Heart right ventricle (tissue), 16 donors: ENCODE measurements at regions of chr9 and their contacts with region 1.

Region 1: GRCh38 chr9:98998441-98999151 is 54.9 kb downstream of the COL15A1 start:
- DNase-seq: peak; percentile 89 to 91
- ATAC-seq: peak; percentile 82 to 92 (median 88)
- H3K4me3 ChIP-seq: peak overlapping the region in 1 of 10 donors; percentile 10
- H3K27ac ChIP-seq: peak overlapping the region; percentile 58 to 92 (median 79)
- H3K4me1 ChIP-seq: peaks cover 26 to 75% (median 67%) of the 10 kb centered on the region in 9 donors
- H3K27me3 ChIP-seq: peaks cover 0 to 5% (median 0%) of the 10 kb centered on the region in 7 donors
- CTCF ChIP-seq: peak; percentile 82 to 97 (median 93)

Region 2: GRCh38 chr9:98848450-98849149 is 150.0 kb before region 1 on chr9:
- intact Hi-C with region 1: loop called in 2 of 10 experiments (anchors 5 to 10 kb)
- DNase-seq: peak; percentile 89 to 92
- ATAC-seq: peak; percentile 95 to 99 (median 98)
- H3K4me3 ChIP-seq: peak overlapping the region; percentile 15 to 50 (median 35)
- H3K27ac ChIP-seq: peak overlapping the region in 6 of 10 donors; percentile 13 to 50 (median 40)
- H3K4me1 ChIP-seq: peaks cover 0 to 17% (median 6%) of the 10 kb centered on the region in 9 donors
- H3K27me3 ChIP-seq: peaks cover 0 to 3% (median 0%) of the 10 kb centered on the region in 7 donors
- CTCF ChIP-seq: peak; percentile 73 to 98 (median 95)

Region 3: DNA sequence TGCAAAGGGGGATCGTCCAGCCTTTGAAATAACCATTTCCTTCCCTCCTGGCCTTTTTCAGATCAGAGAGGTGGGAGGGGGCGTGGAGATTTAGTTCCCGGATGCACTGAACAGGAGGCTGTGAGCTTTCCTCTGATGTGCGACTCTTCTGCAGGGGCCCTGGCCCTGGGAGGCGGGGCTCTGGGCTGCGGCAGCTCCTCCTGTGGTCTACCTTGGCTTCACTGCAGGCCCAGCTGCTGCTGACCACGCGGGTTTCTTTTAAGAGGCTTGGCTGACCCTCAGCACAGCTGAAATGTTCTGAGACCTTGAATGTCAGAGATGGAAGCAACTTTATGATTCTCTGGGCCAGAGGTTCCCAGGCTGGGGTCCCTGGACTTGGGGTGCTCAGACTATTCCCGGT is 81.9 kb before region 1 on chr9:
- intact Hi-C with region 1: loop called in 2 of 10 experiments (anchors 2 to 5 kb)
- DNase-seq: peak; percentile 59 to 63
- ATAC-seq: peak; percentile 78 to 91 (median 86)
- H3K4me3 ChIP-seq: no peak overlapping the region
- H3K27ac ChIP-seq: peak overlapping the region in 9 of 10 donors; percentile 1 to 92 (median 73)
- H3K4me1 ChIP-seq: peaks cover 10 to 37% (median 24%) of the 10 kb centered on the region in 9 donors
- H3K27me3 ChIP-seq: no peaks in the 10 kb centered on the region
- CTCF ChIP-seq: peak in 3 of 9 donors; percentile 10 to 16 (median 12)

Region 4: GRCh38 chr9:98974994-98975712 is 23.4 kb before region 1 on chr9:
- intact Hi-C with region 1: loop called in 4 of 10 experiments (anchors 2 kb)
- DNase-seq: peak; percentile 87 to 91
- ATAC-seq: peak; percentile 60 to 80 (median 72)
- H3K4me3 ChIP-seq: peak overlapping the region in 9 of 10 donors; percentile 2 to 44 (median 34)
- H3K27ac ChIP-seq: peak overlapping the region; percentile 20 to 92 (median 72)
- H3K4me1 ChIP-seq: peaks cover 33 to 100% (median 80%) of the 10 kb centered on the region in 9 donors
- H3K27me3 ChIP-seq: peaks cover 0 to 15% (median 0%) of the 10 kb centered on the region in 7 donors
- CTCF ChIP-seq: peak; percentile 98 to 100 (median 99)

Region 5: DNA sequence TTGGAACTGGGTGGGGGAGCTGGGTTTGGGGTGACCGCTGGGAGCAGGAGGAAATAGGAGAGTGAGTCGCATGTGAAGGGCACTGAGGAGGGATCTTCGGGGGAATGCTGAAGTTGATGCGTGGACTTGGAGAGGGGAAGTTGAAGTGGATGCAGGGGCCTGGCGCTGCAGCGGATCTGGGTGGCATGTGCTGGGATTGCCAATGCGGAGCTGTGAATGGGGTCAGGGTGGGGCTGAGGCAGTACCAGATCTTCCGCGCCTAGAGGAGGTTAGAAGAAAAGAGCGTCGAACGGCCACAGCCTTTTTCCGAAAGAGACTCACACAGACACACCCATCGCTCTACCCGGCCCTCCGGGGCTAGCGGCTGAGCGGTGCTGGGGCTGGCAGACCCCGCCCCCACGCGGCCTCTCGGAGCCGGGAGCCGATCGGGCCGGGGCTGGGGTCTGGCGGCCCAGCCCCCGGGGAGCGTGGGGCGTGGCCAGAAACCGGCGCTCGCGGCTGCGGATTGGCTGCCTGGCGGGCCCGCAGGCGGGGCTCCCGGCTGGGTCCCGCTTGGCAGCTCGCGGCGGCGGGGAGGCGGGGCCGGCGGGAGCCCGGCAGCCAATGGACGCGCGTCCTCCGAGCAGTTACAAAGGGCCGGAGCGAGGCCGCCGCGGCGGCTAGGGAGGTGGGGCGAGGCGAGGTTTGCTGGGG is 106.0 kb after region 1 on chr9 and contains the start of gene TGFBR1:
- intact Hi-C with region 1: loop called in 1 of 10 experiments (anchors 10 kb)
- DNase-seq: peak; percentile 92 to 95
- ATAC-seq: peak; percentile 90 to 97 (median 94)
- H3K4me3 ChIP-seq: peak within 1 kb of the TSS; percentile 52 to 96 (median 86)
- H3K27ac ChIP-seq: peak within 1 kb of the TSS; percentile 50 to 96 (median 89)
- H3K4me1 ChIP-seq: peaks cover 6 to 55% (median 45%) of the 10 kb centered on the region in 9 donors
- H3K27me3 ChIP-seq: no peaks in the 10 kb centered on the region
- CTCF ChIP-seq: peak in 3 of 9 donors; percentile 18 to 30 (median 27)
- total RNA-seq, gene TGFBR1: 10.7 to 25.4 (median 15.0) TPM

Region 6: DNA sequence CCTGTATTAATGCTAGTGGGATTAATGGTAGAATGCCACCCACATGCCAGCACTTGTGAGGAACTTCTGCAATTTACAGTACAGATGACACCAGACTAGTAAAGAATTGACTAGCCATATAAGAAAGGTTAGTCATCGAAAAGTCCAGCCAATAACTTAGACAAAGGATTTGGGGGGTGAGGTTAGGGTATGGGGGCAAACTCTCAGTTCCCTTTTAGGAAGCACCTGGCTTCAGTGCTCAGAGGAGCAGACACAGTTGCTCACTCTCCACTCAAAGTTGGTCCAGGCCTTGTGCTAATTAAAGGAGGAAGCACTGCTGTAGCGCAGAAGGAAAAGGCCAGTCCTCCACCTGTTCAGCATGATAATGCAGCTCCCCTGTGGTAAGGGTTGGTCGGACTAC is 131.5 kb after region 1 on chr9:
- intact Hi-C with region 1: loop called in 2 of 10 experiments (anchors 5 to 10 kb)
- DNase-seq: no peak
- ATAC-seq: no peak
- H3K4me3 ChIP-seq: no peak overlapping the region
- H3K27ac ChIP-seq: no peak overlapping the region
- H3K4me1 ChIP-seq: peaks cover 0 to 50% (median 12%) of the 10 kb centered on the region in 9 donors
- H3K27me3 ChIP-seq: no peaks in the 10 kb centered on the region
- CTCF ChIP-seq: no peak

Region 7: DNA sequence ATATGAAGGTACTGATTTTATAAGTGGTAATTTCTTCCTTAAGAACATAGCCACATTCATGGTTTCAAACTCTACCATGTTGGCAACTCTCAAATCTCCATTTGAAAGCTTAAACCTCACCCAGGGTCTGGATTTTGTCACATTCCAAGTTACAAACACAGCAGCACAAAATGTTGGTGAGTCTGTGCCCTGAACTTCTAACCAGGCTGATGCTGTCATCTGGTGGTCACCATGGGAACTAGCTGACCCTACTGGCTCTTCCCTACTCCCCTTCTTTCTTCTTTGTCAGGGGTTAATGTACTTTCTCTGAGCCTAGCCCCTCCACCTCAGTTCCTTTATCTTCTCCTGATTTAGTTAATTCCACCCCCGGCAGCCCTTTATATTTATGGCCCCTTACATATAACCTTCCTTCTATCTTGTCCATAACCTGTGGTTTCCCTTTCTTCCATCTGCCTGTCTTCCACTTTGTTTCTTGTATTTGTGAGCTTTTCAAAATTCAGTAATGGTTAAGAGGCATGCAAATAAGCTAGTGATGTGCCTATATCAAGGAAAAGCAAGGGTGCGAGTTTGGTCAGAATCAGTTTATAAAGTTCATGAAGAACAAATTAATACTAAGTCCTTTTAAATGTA is 142.2 kb after region 1 on chr9:
- intact Hi-C with region 1: loop called in 9 of 10 experiments (anchors 2 to 10 kb)
- DNase-seq: peak in 1 of 2 donors; percentile 41
- ATAC-seq: peak; percentile 69 to 89 (median 86)
- H3K4me3 ChIP-seq: no peak overlapping the region
- H3K27ac ChIP-seq: peak overlapping the region in 1 of 10 donors; percentile 21
- H3K4me1 ChIP-seq: peaks cover 0 to 36% (median 17%) of the 10 kb centered on the region in 9 donors
- H3K27me3 ChIP-seq: no peaks in the 10 kb centered on the region
- CTCF ChIP-seq: peak; percentile 76 to 96 (median 86)